K562 (cell line): ENCODE measurements at regions of chr3 and their contacts with region 1.

Region 1: GRCh38 chr3:184561061-184561912 is at the start of gene EPHB3:
- DNase-seq: peak; percentile 83 to 89 (median 88)
- ATAC-seq: peak; percentile 96
- H3K4me3 ChIP-seq: no peak within 1 kb of the TSS
- H3K27ac ChIP-seq: no peak within 1 kb of the TSS
- H3K4me1 ChIP-seq: peaks cover 0 to 8% of the 10 kb centered on the region in 2 experiments; a peak in 2 of 5 replicates
- H3K27me3 ChIP-seq: peaks cover 19 to 71% of the 10 kb centered on the region in 2 experiments
- CTCF ChIP-seq: peak; percentile 96 to 100 (median 99)
- EP300 ChIP-seq: no peak
- POLR2A ChIP-seq: no peak
- RAD21 ChIP-seq: peak; percentile 93 to 99
- polyA plus RNA-seq, gene EPHB3: not detected

Region 2: DNA sequence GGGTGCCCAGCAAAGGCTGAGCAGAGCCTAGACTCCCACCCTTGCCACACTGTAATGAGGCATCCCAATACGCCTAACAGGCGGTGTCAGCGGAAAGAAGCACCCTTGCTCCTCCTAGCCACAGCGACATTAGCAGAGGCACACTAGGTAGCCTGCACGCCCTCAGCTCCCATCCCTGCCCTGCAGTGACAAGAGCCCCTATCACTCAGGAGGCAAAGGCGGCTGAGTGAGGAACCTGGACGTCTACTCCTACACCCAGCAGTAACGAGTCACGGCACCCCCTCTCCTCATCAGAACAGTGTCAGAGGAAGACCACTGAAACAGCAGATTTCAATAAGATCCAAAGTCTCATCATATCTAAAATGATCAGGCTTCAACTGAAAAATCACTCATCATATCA is 723.9 kb before region 1 on chr3:
- CTCF ChIA-PET with region 1: no interaction called
- POLR2A ChIA-PET with region 1: no interaction called
- in situ Hi-C with region 1: no loop called
- intact Hi-C with region 1: no loop called
- DNase-seq: no peak
- ATAC-seq: no peak
- H3K4me3 ChIP-seq: no peak overlapping the region
- H3K27ac ChIP-seq: no peak overlapping the region
- H3K4me1 ChIP-seq: no peaks in the 10 kb centered on the region
- H3K27me3 ChIP-seq: no peaks in the 10 kb centered on the region
- CTCF ChIP-seq: no peak
- EP300 ChIP-seq: no peak
- POLR2A ChIP-seq: no peak
- RAD21 ChIP-seq: no peak

Region 3: DNA sequence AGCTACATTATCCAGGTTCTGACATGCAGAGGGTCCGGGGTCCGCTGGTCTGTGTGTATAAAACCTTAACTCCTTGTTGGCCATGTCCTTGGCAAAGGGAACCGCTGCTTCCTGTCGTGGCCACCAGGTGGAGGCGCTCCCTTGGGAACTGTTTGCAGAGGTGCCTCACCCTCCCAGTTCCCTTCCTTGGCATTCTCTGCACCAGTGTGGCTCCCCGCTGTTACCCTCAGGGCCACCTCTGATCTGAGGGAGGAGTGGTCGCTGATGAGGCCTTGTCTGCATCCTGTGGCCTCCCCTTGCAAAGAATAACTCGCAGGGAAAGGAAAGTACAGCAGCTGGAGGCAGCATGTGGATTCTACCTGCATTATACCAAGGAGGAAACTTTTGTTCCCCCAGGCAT is 91.9 kb before region 1 on chr3:
- CTCF ChIA-PET with region 1: no interaction called
- POLR2A ChIA-PET with region 1: no interaction called
- in situ Hi-C with region 1: no loop called
- intact Hi-C with region 1: no loop called
- DNase-seq: peak; percentile 48 to 59 (median 52)
- ATAC-seq: peak; percentile 84
- H3K4me3 ChIP-seq: no peak overlapping the region
- H3K27ac ChIP-seq: no peak overlapping the region
- H3K4me1 ChIP-seq: no peaks in the 10 kb centered on the region; a peak in 1 of 5 replicates
- H3K27me3 ChIP-seq: peaks cover 11 to 47% of the 10 kb centered on the region in 2 experiments; a peak in 4 of 5 replicates
- CTCF ChIP-seq: peak; percentile 76 to 80 (median 77)
- EP300 ChIP-seq: no peak
- POLR2A ChIP-seq: no peak
- RAD21 ChIP-seq: peak; percentile 42 to 78

Region 4: GRCh38 chr3:184481984-184482671 is 79.2 kb before region 1 on chr3:
- CTCF ChIA-PET with region 1: no interaction called
- POLR2A ChIA-PET with region 1: no interaction called
- in situ Hi-C with region 1: no loop called
- intact Hi-C with region 1: no loop called
- DNase-seq: no peak
- ATAC-seq: no peak
- H3K4me3 ChIP-seq: no peak overlapping the region
- H3K27ac ChIP-seq: no peak overlapping the region
- H3K4me1 ChIP-seq: no peaks in the 10 kb centered on the region
- H3K27me3 ChIP-seq: peaks cover 13 to 33% of the 10 kb centered on the region in 2 experiments
- CTCF ChIP-seq: no peak
- EP300 ChIP-seq: no peak
- POLR2A ChIP-seq: no peak
- RAD21 ChIP-seq: no peak

Region 5: DNA sequence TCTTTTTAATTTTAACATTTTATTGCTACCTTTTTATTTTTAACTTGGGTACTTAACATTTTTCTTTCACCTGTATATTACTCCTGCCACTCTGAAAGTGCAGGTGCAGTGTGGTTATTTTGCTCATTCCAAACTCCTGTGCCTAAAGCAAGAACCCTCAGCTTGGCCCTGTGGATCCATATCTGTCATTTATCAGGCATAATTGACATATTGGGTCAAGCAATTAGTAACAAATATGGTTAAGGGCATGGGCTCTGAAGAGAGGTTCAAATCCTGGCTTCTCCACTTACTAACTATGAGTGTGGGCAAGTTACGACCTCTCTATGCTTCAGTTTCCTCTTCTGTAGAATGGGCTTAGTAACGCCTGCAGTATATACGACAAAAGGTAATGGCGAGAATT is 240.9 kb after region 1 on chr3:
- CTCF ChIA-PET with region 1: interaction called, 12 read pairs
- POLR2A ChIA-PET with region 1: no interaction called
- in situ Hi-C with region 1: no loop called
- intact Hi-C with region 1: no loop called
- DNase-seq: no peak
- ATAC-seq: no peak
- H3K4me3 ChIP-seq: no peak overlapping the region
- H3K27ac ChIP-seq: no peak overlapping the region
- H3K4me1 ChIP-seq: peaks cover 0 to 14% of the 10 kb centered on the region in 2 experiments; a peak in 4 of 5 replicates
- H3K27me3 ChIP-seq: peaks cover 0 to 11% of the 10 kb centered on the region in 2 experiments; a peak in 3 of 5 replicates
- CTCF ChIP-seq: no peak
- EP300 ChIP-seq: no peak
- POLR2A ChIP-seq: no peak
- RAD21 ChIP-seq: no peak